ENCODE measurements at regions of chr11 and their contacts with region 1.

Region 1: DNA sequence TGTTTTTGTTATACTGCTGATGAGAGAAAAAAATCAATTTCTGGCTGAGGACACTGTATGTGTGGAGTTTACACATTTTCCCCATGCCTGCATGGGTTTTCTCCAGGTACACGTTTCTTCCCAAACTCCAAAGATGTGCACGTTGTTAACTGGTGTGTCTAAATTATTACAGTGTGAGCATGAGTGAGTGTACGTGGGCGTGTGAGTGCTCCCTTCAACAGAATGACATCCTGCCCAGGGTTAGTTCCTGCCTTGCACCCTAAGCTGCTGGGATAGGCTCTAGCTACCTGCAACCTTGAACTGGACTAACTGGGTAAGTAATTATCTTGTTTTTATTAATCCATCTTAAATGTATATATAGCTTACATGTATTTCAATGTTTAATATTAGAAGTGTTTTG is 5.5 kb downstream of the NPAT start:
- DNase-seq: peak in 1 of 9 experiments; percentile 43
- ATAC-seq: peak; percentile 51
- H3K4me3 ChIP-seq: no peak overlapping the region
- H3K4me3 Mint-ChIP-seq: peak overlapping the region; percentile 47
- H3K27ac ChIP-seq: no peak overlapping the region
- H3K27ac Mint-ChIP-seq: peak overlapping the region; percentile 53
- H3K4me1 ChIP-seq: peaks cover 71% of the 10 kb centered on the region
- H3K4me1 Mint-ChIP-seq: peaks cover 76% of the 10 kb centered on the region
- H3K27me3 ChIP-seq: no peaks in the 10 kb centered on the region
- H3K27me3 Mint-ChIP-seq: no peaks in the 10 kb centered on the region
- CTCF ChIP-seq: no peak

Region 2: DNA sequence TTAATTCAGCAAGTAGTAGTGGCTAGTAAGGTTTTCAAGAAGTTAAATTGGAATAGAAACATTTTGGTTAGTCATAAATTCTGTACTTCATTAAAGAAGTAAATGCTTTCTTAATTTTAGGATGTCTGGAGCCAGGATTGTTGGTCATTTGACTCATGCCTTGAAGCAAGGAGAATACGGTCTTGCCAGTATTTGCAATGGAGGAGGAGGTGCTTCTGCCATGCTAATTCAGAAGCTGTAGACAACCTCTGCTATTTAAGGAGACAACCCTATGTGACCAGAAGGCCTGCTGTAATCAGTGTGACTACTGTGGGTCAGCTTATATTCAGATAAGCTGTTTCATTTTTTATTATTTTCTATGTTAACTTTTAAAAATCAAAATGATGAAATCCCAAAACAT is 69.8 kb before region 1 on chr11:
- CTCF ChIA-PET with region 1: no interaction called
- POLR2A ChIA-PET with region 1: no interaction called
- intact Hi-C with region 1: no loop called
- DNase-seq: no peak
- ATAC-seq: no peak
- H3K4me3 ChIP-seq: no peak overlapping the region
- H3K4me3 Mint-ChIP-seq: no peak overlapping the region
- H3K27ac ChIP-seq: no peak overlapping the region
- H3K27ac Mint-ChIP-seq: peak overlapping the region; percentile 52
- H3K4me1 ChIP-seq: no peaks in the 10 kb centered on the region
- H3K4me1 Mint-ChIP-seq: peaks cover 4% of the 10 kb centered on the region
- H3K27me3 ChIP-seq: no peaks in the 10 kb centered on the region
- H3K27me3 Mint-ChIP-seq: no peaks in the 10 kb centered on the region
- CTCF ChIP-seq: no peak

Region 3: GRCh38 chr11:108199446-108200321 is 17.3 kb before region 1 on chr11:
- CTCF ChIA-PET with region 1: no interaction called
- POLR2A ChIA-PET with region 1: interaction called, 4 read pairs
- intact Hi-C with region 1: loop called in 1 of 2 experiments (anchors 2 kb)
- DNase-seq: peak in 3 of 9 experiments; percentile 24 to 64 (median 30)
- ATAC-seq: peak; percentile 64
- H3K4me3 ChIP-seq: no peak overlapping the region
- H3K4me3 Mint-ChIP-seq: no peak overlapping the region
- H3K27ac ChIP-seq: no peak overlapping the region
- H3K27ac Mint-ChIP-seq: peak overlapping the region; percentile 83
- H3K4me1 ChIP-seq: peaks cover 52% of the 10 kb centered on the region
- H3K4me1 Mint-ChIP-seq: peaks cover 78% of the 10 kb centered on the region
- H3K27me3 ChIP-seq: no peaks in the 10 kb centered on the region
- H3K27me3 Mint-ChIP-seq: no peaks in the 10 kb centered on the region
- CTCF ChIP-seq: no peak

Region 4: DNA sequence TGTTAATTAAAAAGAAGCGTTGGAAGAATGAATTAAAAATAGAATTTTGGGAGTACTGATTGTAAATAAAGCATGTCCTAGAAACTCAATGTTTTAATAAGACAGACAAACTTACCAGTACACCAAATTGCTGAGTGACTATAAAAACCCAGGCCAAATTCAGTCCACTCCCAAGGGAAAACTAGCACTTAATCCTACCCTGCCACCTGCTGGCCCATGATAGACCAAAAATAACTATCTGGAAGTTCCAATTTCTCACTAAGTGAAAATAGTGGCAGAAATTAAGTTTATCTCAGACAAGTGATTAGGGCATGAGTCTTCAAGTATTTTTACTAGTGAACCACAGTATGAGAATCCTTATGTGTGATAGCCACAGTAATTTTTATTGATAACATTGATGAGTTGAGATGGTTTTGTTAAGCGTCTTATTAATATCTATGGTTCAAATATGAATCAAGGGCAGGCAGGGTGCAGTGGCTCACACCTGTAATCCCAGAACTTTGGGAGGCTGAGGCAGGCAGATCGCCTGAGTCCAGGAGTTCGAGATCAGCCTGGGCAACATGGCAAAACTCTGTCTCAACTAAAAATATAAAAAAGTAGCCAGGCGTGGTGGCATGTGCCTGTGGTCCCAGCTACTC is 438.1 kb after region 1 on chr11:
- CTCF ChIA-PET with region 1: no interaction called
- POLR2A ChIA-PET with region 1: no interaction called
- intact Hi-C with region 1: loop called in 1 of 2 experiments (anchors 5 kb)
- DNase-seq: peak in 5 of 9 experiments; percentile 16 to 46 (median 25)
- ATAC-seq: no peak
- H3K4me3 ChIP-seq: no peak overlapping the region
- H3K4me3 Mint-ChIP-seq: no peak overlapping the region
- H3K27ac ChIP-seq: no peak overlapping the region
- H3K27ac Mint-ChIP-seq: no peak overlapping the region
- H3K4me1 ChIP-seq: no peaks in the 10 kb centered on the region
- H3K4me1 Mint-ChIP-seq: no peaks in the 10 kb centered on the region
- H3K27me3 ChIP-seq: no peaks in the 10 kb centered on the region
- H3K27me3 Mint-ChIP-seq: peaks cover 4% of the 10 kb centered on the region
- CTCF ChIP-seq: peak; percentile 45